ENCODE measurements at regions of chr12 and their contacts with region 1.

Region 1: DNA sequence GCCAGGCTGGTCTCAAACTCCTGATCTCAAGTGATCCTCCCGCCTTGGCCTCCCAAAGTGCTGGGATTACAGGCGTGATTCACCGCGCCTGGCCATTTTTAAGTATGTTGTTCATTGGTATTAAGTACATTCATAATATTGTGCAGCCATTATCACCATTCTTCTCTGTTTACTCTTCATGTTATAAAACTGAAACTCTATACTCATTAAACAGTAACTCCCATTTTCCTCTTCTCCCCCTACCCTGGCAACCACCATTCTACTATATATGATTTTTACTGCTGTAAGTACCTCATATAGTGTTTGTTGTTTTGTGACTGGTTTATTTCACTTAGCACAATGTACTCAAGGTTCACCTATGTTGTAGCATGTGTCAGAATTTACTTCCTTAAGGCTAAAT is 23.1 kb downstream of the METAP2 start:
- DNase-seq: no peak
- H3K4me3 ChIP-seq: no peak overlapping the region
- H3K27ac ChIP-seq: no peak overlapping the region
- H3K4me1 ChIP-seq: no peaks in the 10 kb centered on the region
- H3K27me3 ChIP-seq: no peaks in the 10 kb centered on the region
- CTCF ChIP-seq: no peak

Region 2: GRCh38 chr12:95538656-95539055 is 41.6 kb after region 1 on chr12:
- CTCF ChIA-PET with region 1: no interaction called
- dilution Hi-C with region 1: loop called (anchors 5 kb)
- in situ Hi-C with region 1: no loop called
- intact Hi-C with region 1: no loop called
- DNase-seq: no peak
- H3K4me3 ChIP-seq: no peak overlapping the region
- H3K27ac ChIP-seq: no peak overlapping the region
- H3K4me1 ChIP-seq: no peaks in the 10 kb centered on the region
- H3K27me3 ChIP-seq: no peaks in the 10 kb centered on the region
- CTCF ChIP-seq: no peak

Measured in mammary epithelial cell (primary cell).